Activated CD4-positive, alpha-beta memory T cell treated with anti-CD3 and anti-CD28 coated beads for 36 hours (primary cell): ENCODE measurements at regions of chrX and their contacts with region 1.

Region 1: GRCh38 chrX:24241822-24242648 is 71.8 kb downstream of the SUPT20HL2 start:
- DNase-seq: no peak
- H3K4me3 Mint-ChIP-seq: no peak overlapping the region
- H3K27ac Mint-ChIP-seq: no peak overlapping the region
- H3K4me1 Mint-ChIP-seq: peaks cover 11% of the 10 kb centered on the region
- H3K27me3 Mint-ChIP-seq: no peaks in the 10 kb centered on the region

Region 2: DNA sequence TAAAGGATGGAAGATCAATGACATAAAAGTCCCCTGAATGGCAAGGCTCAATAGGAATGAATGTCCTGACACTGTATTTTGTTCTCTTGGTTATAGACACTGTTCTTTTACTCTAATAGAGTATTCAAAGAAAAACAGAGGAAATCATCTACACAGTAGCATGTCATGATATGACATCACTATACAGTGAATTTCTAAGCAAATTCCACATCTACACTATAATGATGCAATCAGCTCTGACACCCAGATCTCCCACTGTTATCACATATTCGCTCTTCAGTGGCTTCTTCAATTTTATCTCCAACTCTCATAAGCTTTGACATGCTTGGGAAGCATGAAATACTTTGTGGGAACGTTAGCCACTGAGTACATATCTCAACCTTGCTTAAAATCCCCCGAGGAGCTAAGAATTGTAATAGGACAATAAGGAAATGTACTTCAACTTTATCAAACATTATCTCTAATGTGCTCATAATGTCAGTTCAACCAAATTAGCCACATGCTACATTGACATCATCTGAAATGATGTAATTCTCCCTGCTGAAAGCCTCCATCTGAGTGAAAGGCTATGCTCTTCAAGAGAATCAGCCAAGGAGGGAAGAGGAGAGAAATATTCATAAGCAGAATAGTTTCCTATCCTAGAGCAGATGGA is 1047.0 kb before region 1 on chrX:
- CTCF ChIA-PET with region 1: no interaction called
- POLR2A ChIA-PET with region 1: no interaction called
- intact Hi-C with region 1: no loop called
- DNase-seq: no peak
- H3K4me3 Mint-ChIP-seq: no peak overlapping the region
- H3K27ac Mint-ChIP-seq: no peak overlapping the region
- H3K4me1 Mint-ChIP-seq: no peaks in the 10 kb centered on the region
- H3K27me3 Mint-ChIP-seq: no peaks in the 10 kb centered on the region

Region 3: GRCh38 chrX:23907498-23908218 is 334.4 kb before region 1 on chrX and contains the starts of genes APOO and CXorf58:
- CTCF ChIA-PET with region 1: no interaction called
- POLR2A ChIA-PET with region 1: no interaction called
- intact Hi-C with region 1: loop called (anchors 5 kb)
- DNase-seq: peak; percentile 94
- H3K4me3 Mint-ChIP-seq: peak within 1 kb of the TSS; percentile 74
- H3K27ac Mint-ChIP-seq: peak within 1 kb of the TSS; percentile 87
- H3K4me1 Mint-ChIP-seq: peaks cover 21% of the 10 kb centered on the region
- H3K27me3 Mint-ChIP-seq: no peaks in the 10 kb centered on the region
- total RNA-seq, gene APOO: 32.8 to 35.0 TPM
- total RNA-seq, gene CXorf58: 0.17 TPM in 1 of 2 experiments, not detected in the other

Region 4: DNA sequence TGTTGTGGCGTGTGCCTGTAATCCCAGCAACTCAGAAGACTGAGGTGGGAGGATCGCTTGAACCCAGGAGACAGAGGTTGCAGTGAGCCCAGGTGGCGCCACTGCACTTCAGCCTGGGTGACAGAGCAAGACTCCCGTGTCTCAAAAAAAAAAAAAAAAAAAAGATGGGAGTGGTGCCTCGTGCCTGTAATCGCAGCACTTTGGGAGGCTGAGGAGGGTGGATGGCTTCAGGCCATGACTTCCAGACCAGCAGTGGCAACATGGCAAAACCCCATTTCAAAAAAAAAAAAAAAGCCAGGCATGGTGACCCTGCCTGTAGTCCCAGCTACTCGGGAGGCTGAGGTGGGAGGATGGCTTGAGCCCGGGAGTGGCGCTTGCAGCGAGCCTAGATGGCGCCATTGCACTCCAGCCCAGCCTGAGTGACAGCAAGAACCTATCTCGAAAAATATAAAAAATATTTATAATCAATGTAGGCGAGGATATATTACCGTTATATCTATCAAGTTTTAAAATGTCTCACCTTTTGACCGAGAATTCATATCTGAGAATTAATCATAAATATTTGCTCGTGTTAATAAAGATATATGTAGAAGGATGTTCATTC is 160.3 kb before region 1 on chrX:
- CTCF ChIA-PET with region 1: interaction called, 8 read pairs
- POLR2A ChIA-PET with region 1: no interaction called
- intact Hi-C with region 1: loop called (anchors 1 kb)
- DNase-seq: peak; percentile 70
- H3K4me3 Mint-ChIP-seq: no peak overlapping the region
- H3K27ac Mint-ChIP-seq: no peak overlapping the region
- H3K4me1 Mint-ChIP-seq: peaks cover 16% of the 10 kb centered on the region
- H3K27me3 Mint-ChIP-seq: no peaks in the 10 kb centered on the region

Region 5: DNA sequence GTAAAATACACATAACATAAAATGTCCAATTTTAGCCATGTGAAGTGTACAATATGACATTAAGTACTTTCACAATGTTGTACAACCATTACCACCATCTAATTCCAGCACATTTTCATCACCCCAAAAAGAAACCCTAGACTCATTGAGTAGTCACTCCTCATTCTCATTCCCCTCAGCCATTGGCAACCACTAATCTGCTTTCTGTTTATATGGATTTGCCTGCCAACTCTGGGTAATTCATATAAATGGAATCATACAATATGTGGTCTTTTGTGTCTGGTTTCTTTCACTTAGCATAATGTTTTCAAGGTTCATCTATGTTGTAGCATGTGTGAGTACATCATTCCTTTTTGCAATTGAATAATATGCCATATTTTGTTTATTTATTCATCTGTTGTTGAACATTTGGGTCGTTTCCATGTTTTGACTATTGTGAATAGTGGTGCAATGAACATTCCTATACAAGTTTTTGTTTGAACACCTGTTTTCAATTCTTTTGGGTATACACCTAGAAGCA is 144.2 kb before region 1 on chrX:
- CTCF ChIA-PET with region 1: no interaction called
- POLR2A ChIA-PET with region 1: no interaction called
- intact Hi-C with region 1: loop called (anchors 5 kb)
- DNase-seq: no peak
- H3K4me3 Mint-ChIP-seq: no peak overlapping the region
- H3K27ac Mint-ChIP-seq: no peak overlapping the region
- H3K4me1 Mint-ChIP-seq: peaks cover 20% of the 10 kb centered on the region
- H3K27me3 Mint-ChIP-seq: no peaks in the 10 kb centered on the region

Region 6: DNA sequence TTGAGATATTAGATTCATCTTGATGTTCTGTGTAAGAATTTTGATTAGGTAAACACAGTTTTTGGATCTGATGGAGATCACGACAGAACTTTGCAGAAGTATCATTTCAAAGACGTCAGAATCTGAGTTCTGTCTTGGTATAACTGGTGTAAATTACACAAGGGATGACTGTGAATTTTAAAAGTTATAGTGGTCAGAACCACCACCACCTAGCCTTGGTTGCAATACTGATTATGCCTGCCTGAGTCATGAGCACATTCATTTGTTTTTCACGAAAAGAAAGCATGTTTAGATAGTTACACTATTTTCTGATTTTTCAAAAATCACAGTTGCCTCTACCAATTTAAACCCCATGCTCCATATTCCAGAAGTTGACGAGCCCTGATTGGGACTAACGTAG is 37.7 kb before region 1 on chrX:
- CTCF ChIA-PET with region 1: no interaction called
- POLR2A ChIA-PET with region 1: no interaction called
- intact Hi-C with region 1: loop called (anchors 5 kb)
- DNase-seq: no peak
- H3K4me3 Mint-ChIP-seq: no peak overlapping the region
- H3K27ac Mint-ChIP-seq: peak overlapping the region; percentile 23
- H3K4me1 Mint-ChIP-seq: peaks cover 49% of the 10 kb centered on the region
- H3K27me3 Mint-ChIP-seq: no peaks in the 10 kb centered on the region